ENCODE measurements at regions of chr7 and their contacts with region 1.

Region 1: GRCh38 chr7:121395961-121396757 is at the start of gene FAM3C:
- DNase-seq: peak; percentile 83
- H3K4me3 Mint-ChIP-seq: peak within 1 kb of the TSS; percentile 82
- H3K27ac Mint-ChIP-seq: peak within 1 kb of the TSS; percentile 77
- H3K4me1 Mint-ChIP-seq: peaks cover 42% of the 10 kb centered on the region
- H3K27me3 Mint-ChIP-seq: no peaks in the 10 kb centered on the region
- total RNA-seq, gene FAM3C: 40.7 to 41.0 TPM

Region 2: GRCh38 chr7:120916121-120916520 is 480.0 kb before region 1 on chr7:
- CTCF ChIA-PET with region 1: no interaction called
- POLR2A ChIA-PET with region 1: no interaction called
- DNase-seq: no peak
- H3K4me3 Mint-ChIP-seq: no peak overlapping the region
- H3K27ac Mint-ChIP-seq: no peak overlapping the region
- H3K4me1 Mint-ChIP-seq: no peaks in the 10 kb centered on the region
- H3K27me3 Mint-ChIP-seq: peaks cover 11% of the 10 kb centered on the region

Region 3: GRCh38 chr7:121366852-121367431 is 29.2 kb before region 1 on chr7:
- CTCF ChIA-PET with region 1: interaction called, 76 read pairs
- POLR2A ChIA-PET with region 1: interaction called, 22 read pairs
- DNase-seq: no peak
- H3K4me3 Mint-ChIP-seq: no peak overlapping the region
- H3K27ac Mint-ChIP-seq: no peak overlapping the region
- H3K4me1 Mint-ChIP-seq: peaks cover 50% of the 10 kb centered on the region
- H3K27me3 Mint-ChIP-seq: no peaks in the 10 kb centered on the region

Region 4: GRCh38 chr7:121379930-121380329 is 16.2 kb before region 1 on chr7:
- CTCF ChIA-PET with region 1: interaction called, 32 read pairs
- POLR2A ChIA-PET with region 1: interaction called, 13 read pairs
- DNase-seq: no peak
- H3K4me3 Mint-ChIP-seq: no peak overlapping the region
- H3K27ac Mint-ChIP-seq: no peak overlapping the region
- H3K4me1 Mint-ChIP-seq: peaks cover 28% of the 10 kb centered on the region
- H3K27me3 Mint-ChIP-seq: no peaks in the 10 kb centered on the region

Region 5: DNA sequence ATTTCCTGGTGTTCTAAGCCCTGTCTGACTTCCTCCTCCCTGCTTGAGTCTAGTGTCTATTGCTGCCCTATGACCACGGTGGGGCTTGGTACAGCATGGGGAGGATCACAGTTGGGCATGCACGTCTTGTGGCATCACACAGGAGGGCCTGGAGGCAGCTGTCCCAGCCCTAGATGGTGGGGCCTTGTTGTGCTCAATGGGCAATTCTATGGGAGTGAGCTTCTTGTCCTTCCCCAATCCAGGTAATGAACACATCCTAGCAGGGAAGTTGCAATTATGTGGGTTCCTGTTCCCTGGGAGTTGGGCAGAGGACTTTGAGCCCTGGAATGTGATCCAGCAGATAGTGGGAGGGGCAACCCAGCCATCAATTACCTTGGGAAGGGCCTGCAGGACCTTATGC is 10.8 kb after region 1 on chr7:
- CTCF ChIA-PET with region 1: interaction called, 13 read pairs
- POLR2A ChIA-PET with region 1: interaction called, 8 read pairs
- DNase-seq: no peak
- H3K4me3 Mint-ChIP-seq: no peak overlapping the region
- H3K27ac Mint-ChIP-seq: no peak overlapping the region
- H3K4me1 Mint-ChIP-seq: peaks cover 6% of the 10 kb centered on the region
- H3K27me3 Mint-ChIP-seq: peaks cover 12% of the 10 kb centered on the region

Region 6: DNA sequence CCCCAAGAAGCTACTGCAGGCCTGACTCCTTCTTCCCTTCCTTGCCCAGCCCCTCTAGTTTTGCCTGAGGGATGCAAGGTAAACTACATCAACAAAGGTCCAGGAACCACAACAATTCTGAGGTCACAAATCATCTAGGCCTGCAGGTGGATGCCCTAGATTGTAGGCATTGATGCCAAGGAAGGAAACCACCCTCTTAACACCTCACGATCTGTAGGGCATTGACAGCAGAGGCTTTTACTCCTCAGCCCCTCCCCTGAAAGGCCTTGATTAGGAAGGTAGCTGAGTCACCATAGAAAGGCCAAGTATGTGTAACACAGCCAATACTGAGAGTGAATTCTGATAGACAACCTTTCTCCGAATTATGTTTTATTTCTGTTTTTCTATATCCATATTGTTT is 46.7 kb after region 1 on chr7:
- CTCF ChIA-PET with region 1: interaction called, 18 read pairs
- POLR2A ChIA-PET with region 1: interaction called, 14 read pairs
- DNase-seq: peak; percentile 35
- H3K4me3 Mint-ChIP-seq: no peak overlapping the region
- H3K27ac Mint-ChIP-seq: peak overlapping the region; percentile 45
- H3K4me1 Mint-ChIP-seq: peaks cover 45% of the 10 kb centered on the region
- H3K27me3 Mint-ChIP-seq: no peaks in the 10 kb centered on the region

Region 7: GRCh38 chr7:121547544-121548092 is 151.5 kb after region 1 on chr7:
- CTCF ChIA-PET with region 1: interaction called, 23 read pairs
- POLR2A ChIA-PET with region 1: interaction called, 20 read pairs
- DNase-seq: no peak
- H3K4me3 Mint-ChIP-seq: no peak overlapping the region
- H3K27ac Mint-ChIP-seq: no peak overlapping the region
- H3K4me1 Mint-ChIP-seq: peaks cover 50% of the 10 kb centered on the region
- H3K27me3 Mint-ChIP-seq: no peaks in the 10 kb centered on the region